ENCODE measurements at regions of chr7 and their contacts with region 1.

Region 1: DNA sequence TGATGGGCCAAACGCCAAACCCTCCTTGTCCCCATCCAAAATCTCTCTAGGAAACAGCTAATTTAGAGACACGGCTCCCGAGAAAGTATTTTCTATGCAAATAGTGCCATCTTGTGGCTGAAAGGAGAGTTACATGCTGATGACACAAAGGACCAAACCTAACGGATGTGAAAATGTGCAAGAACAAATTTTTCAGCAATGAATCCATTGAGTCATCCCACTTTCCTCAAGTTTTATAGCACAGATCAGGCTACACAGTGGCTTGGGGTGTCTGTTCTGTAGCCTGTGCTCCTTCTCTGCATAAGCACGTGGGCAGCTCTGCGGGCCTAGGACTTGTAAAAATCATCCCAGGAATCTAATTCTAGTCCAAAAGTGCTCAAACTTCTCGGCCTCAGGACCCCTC is 154.8 kb upstream of the PRR15 start:
- DNase-seq: peak in 1 of 2 experiments; percentile 76
- H3K4me3 ChIP-seq: no peak overlapping the region
- H3K4me3 Mint-ChIP-seq: no peak overlapping the region
- H3K27ac Mint-ChIP-seq: no peak overlapping the region
- H3K4me1 ChIP-seq: peaks cover 23% of the 10 kb centered on the region
- H3K4me1 Mint-ChIP-seq: peaks cover 22% of the 10 kb centered on the region
- H3K27me3 ChIP-seq: no peaks in the 10 kb centered on the region
- H3K27me3 Mint-ChIP-seq: no peaks in the 10 kb centered on the region
- CTCF ChIP-seq: peak; percentile 74 to 86

Region 2: DNA sequence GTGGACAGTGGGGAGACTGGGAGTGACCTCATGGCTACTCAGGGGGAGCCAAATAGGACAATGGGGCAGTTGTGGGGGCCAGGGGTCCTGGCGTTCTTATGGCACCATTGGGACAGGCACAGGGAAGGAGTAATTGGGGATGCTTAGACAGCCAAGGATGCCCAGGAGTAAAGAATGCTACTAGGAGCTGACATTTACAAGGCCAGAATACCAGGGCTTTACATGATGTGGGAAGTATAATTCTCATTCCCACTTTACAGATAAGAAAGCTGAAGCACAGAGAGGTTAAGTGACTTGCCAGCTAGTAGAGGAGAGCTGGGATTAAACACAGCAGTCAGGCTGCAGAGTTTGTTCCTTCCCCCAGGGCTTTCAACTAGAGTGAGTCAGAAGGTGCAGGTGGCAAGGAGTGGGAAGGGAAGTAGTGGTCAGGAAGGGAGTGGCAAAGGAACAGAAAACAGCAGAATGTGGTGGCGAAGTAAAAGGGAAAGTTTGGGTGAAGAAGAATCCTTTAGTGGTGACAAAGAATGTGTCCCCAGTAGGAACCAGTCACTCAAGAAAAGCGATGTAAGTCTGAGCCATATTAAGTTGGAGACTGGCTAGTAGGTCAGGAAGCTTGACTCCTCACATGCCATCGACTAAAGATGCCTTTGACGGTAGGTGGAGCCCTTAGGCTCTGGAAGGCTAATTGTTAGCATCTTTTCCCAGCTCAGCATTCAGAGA is 295.3 kb before region 1 on chr7:
- CTCF ChIA-PET with region 1: interaction called, 10 read pairs
- POLR2A ChIA-PET with region 1: no interaction called
- intact Hi-C with region 1: loop called (anchors 2 kb)
- DNase-seq: peak; percentile 70 to 73
- H3K4me3 ChIP-seq: no peak overlapping the region
- H3K4me3 Mint-ChIP-seq: peak overlapping the region; percentile 30
- H3K27ac Mint-ChIP-seq: peak overlapping the region; percentile 89
- H3K4me1 ChIP-seq: peaks cover 76% of the 10 kb centered on the region
- H3K4me1 Mint-ChIP-seq: peaks cover 59% of the 10 kb centered on the region
- H3K27me3 ChIP-seq: no peaks in the 10 kb centered on the region
- H3K27me3 Mint-ChIP-seq: no peaks in the 10 kb centered on the region
- CTCF ChIP-seq: peak in 1 of 2 experiments; percentile 60

Region 3: DNA sequence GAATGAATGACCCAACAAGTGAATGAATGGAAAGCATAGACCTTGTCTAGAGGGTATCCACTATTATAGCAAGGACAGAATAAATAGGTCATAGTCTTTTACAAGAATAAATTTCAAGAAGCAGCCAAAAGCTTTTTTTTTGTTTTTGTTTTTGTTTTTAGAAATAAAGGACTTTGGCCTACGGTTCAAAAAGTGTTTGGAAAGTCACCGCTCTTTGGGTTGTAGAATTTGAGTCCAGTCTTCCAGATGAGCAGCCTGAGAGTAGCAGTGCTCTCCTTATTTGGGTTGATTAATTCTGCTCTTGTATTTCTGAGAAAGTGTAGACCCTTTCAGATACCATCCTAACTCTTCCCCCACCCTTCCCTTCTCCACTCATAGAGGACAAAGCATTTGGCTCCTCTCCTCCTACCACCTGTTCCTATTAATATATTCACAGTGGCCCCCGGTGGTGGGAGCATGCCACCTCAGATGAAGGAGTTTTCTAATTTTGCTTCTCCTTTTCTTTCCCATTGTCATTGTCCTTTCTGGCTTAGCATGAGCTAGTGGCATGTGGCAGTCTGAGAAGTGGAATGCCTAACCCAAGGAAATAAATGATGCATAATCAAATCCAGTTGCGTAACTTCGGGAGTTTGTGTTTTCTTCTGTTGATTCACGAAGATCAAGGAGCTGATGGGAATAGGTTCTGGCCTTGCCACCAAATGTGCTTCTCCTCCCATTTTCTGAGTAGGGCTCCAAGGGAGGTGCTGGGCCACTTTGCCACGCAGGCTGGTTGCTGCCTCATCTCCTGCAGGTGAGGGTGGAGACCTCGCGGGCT is 99.6 kb before region 1 on chr7:
- CTCF ChIA-PET with region 1: interaction called, 4 read pairs
- POLR2A ChIA-PET with region 1: no interaction called
- intact Hi-C with region 1: loop called (anchors 1 kb)
- DNase-seq: peak; percentile 50 to 64
- H3K4me3 ChIP-seq: no peak overlapping the region
- H3K4me3 Mint-ChIP-seq: no peak overlapping the region
- H3K27ac Mint-ChIP-seq: no peak overlapping the region
- H3K4me1 ChIP-seq: peaks cover 45% of the 10 kb centered on the region
- H3K4me1 Mint-ChIP-seq: peaks cover 41% of the 10 kb centered on the region
- H3K27me3 ChIP-seq: no peaks in the 10 kb centered on the region
- H3K27me3 Mint-ChIP-seq: no peaks in the 10 kb centered on the region
- CTCF ChIP-seq: peak; percentile 59 to 70

Region 4: DNA sequence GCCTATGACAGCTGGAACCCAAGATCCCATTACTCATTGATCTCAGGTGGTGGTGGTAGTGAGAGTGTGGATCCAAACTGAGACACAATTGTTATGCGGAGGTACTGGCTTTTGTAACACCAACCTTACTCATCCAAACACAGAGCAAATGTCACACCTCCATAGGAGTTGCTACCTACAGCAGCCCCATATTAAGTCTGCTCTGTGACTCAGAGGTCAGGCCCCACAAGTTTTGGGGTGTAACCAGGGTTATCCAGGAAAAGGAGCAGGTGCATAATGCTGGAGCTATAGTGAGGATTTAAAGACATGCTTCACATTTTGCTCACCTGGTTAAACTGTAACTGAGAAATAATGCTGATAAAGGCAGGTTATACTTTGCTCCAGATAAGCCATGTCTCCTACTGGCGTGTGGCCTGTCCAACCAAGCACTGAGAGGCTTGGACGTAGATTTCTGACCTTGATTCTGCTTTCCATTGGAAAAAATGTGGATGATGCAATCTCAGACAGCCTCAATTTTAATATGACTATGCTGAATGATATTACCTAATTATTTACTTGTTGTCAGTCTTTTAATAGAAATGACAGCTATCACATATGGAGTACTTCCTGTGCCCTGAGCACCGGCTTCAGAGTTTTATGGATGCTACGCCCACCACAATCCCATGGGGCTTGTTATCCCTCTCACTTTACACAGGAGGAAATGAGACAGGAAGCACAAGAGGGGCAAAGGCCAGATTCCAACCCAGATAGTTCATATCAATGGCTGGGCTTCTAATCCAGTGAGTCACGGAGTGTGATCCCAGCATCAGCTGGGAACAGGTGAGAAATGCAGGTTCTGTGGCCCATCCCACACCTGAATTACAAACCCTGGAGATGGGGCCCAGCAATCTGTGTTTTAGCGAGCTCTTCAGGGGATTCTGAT is 32.9 kb before region 1 on chr7:
- CTCF ChIA-PET with region 1: interaction called, 4 read pairs
- POLR2A ChIA-PET with region 1: no interaction called
- intact Hi-C with region 1: loop called (anchors 2 kb)
- DNase-seq: peak; percentile 80 to 90
- H3K4me3 ChIP-seq: 0 out of 2 replicates have a peak overlapping the region, but pooled peaks have one; percentile 9
- H3K4me3 Mint-ChIP-seq: peak overlapping the region; percentile 42
- H3K27ac Mint-ChIP-seq: peak overlapping the region; percentile 93
- H3K4me1 ChIP-seq: peaks cover 27% of the 10 kb centered on the region
- H3K4me1 Mint-ChIP-seq: peaks cover 31% of the 10 kb centered on the region
- H3K27me3 ChIP-seq: no peaks in the 10 kb centered on the region
- H3K27me3 Mint-ChIP-seq: no peaks in the 10 kb centered on the region
- CTCF ChIP-seq: no peak

Region 5: DNA sequence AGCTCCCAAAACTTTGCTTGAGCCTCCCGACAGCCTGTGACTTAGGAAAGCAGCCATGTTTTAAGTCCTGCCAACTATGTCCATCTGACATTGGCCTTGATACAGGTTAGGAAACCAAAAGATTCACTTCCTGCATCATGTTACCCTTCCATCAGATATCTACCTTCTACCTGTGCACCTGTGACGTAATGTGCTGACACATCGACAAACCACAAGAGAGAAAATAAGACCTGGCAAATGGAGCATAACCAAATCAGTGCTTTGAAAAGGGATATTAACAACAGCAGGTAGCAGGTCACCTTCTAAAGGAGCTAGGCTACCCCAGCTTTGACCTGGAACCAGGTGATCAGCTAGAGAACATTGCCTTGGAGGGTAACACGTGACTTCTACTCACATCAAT is 140.0 kb after region 1 on chr7:
- CTCF ChIA-PET with region 1: no interaction called
- POLR2A ChIA-PET with region 1: no interaction called
- intact Hi-C with region 1: no loop called
- DNase-seq: no peak
- H3K4me3 ChIP-seq: no peak overlapping the region
- H3K4me3 Mint-ChIP-seq: no peak overlapping the region
- H3K27ac Mint-ChIP-seq: no peak overlapping the region
- H3K4me1 ChIP-seq: no peaks in the 10 kb centered on the region
- H3K4me1 Mint-ChIP-seq: no peaks in the 10 kb centered on the region
- H3K27me3 ChIP-seq: no peaks in the 10 kb centered on the region
- H3K27me3 Mint-ChIP-seq: no peaks in the 10 kb centered on the region
- CTCF ChIP-seq: no peak

Measured in Caco-2 (cell line).